ENCODE measurements at regions of chr7 and their contacts with region 1.

Region 1: DNA sequence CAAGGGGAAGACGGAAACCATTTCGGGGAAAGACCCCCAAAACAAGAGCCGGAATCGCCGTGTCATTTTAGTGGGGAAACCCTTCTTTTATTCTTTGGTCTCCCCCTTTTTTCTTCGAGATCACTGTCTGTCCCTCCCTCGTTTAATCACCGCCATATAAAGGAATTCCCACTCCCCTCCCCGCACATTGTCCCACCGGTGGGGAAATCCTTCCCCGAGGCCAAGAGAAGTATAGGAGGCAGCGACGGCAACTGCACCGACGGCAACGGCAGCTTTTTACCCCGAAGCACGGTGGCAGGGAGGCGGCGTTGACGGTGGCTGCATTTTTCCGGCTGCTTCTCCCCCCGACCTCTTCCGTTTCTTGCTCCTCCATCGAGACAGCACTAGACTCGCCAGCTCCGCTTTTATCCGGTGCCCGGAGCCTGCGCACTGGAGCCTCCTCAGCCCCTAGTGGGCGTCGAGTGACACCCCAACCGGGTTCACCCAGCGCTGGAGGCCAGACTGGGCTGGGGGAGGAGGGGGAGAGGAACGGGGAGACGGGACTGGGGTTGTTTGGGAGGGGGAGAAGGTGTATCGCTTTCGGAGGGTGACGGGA is 687 bp upstream of the KMT2E start:
- DNase-seq: peak; percentile 97
- ATAC-seq: peak; percentile 63
- H3K4me3 Mint-ChIP-seq: peak overlapping the region; percentile 96
- H3K27ac Mint-ChIP-seq: peak overlapping the region; percentile 100
- H3K4me1 Mint-ChIP-seq: peaks cover 14% of the 10 kb centered on the region
- H3K27me3 Mint-ChIP-seq: no peaks in the 10 kb centered on the region

Region 2: DNA sequence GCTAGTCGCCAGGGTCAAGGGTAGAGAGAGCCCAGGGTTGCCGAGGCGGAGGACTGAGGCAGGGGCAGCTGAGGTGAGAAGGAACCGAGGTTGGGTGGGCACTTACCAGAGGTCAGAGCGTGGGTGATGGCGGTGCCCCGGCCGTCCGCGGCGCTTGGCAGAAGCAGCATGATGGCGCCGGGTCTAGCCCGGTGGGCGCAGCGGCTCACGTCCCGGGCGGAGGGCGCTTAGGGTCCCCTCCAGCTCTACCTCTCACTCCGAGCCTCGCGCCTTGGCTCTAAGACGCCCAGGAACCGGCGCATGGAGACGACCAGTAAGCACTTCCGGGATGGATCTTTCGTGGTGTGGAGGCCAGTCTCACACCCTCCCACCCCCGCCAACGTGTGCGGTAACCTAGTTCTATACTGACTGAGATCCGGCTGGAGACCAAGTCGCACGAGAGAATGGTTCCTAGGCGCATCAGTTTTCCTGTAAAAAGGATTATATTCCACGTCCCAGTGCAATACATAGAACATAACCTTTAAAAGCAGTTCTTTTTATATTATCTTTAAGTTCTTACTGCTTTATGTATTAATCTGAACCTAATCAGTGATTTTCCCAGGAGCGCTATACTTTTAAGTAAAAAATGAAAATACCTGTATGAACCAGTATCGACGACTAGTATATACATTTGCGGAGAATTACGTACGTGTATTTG is 1668.7 kb before region 1 on chr7 and contains the start of gene DNAJC2:
- CTCF ChIA-PET with region 1: no interaction called
- POLR2A ChIA-PET with region 1: interaction called, 7 read pairs
- intact Hi-C with region 1: loop called (anchors 2 to 10 kb)
- DNase-seq: peak; percentile 91
- ATAC-seq: peak; percentile 79
- H3K4me3 Mint-ChIP-seq: peak within 1 kb of the TSS; percentile 92
- H3K27ac Mint-ChIP-seq: peak within 1 kb of the TSS; percentile 99
- H3K4me1 Mint-ChIP-seq: peaks cover 60% of the 10 kb centered on the region
- H3K27me3 Mint-ChIP-seq: no peaks in the 10 kb centered on the region
- total RNA-seq, gene DNAJC2: 50.0 to 56.2 TPM

Region 3: GRCh38 chr7:104814631-104815400 is 198.5 kb before region 1 on chr7:
- CTCF ChIA-PET with region 1: no interaction called
- POLR2A ChIA-PET with region 1: no interaction called
- intact Hi-C with region 1: no loop called
- DNase-seq: no peak
- ATAC-seq: no peak
- H3K4me3 Mint-ChIP-seq: no peak overlapping the region
- H3K27ac Mint-ChIP-seq: no peak overlapping the region
- H3K4me1 Mint-ChIP-seq: no peaks in the 10 kb centered on the region
- H3K27me3 Mint-ChIP-seq: peaks cover 10% of the 10 kb centered on the region

Region 4: GRCh38 chr7:104998040-104998752 is 15.1 kb before region 1 on chr7:
- CTCF ChIA-PET with region 1: interaction called, 14 read pairs
- POLR2A ChIA-PET with region 1: interaction called, 5 read pairs
- intact Hi-C with region 1: no loop called
- DNase-seq: no peak
- ATAC-seq: peak; percentile 53
- H3K4me3 Mint-ChIP-seq: no peak overlapping the region
- H3K27ac Mint-ChIP-seq: peak overlapping the region; percentile 78
- H3K4me1 Mint-ChIP-seq: peaks cover 91% of the 10 kb centered on the region
- H3K27me3 Mint-ChIP-seq: no peaks in the 10 kb centered on the region

Region 5: DNA sequence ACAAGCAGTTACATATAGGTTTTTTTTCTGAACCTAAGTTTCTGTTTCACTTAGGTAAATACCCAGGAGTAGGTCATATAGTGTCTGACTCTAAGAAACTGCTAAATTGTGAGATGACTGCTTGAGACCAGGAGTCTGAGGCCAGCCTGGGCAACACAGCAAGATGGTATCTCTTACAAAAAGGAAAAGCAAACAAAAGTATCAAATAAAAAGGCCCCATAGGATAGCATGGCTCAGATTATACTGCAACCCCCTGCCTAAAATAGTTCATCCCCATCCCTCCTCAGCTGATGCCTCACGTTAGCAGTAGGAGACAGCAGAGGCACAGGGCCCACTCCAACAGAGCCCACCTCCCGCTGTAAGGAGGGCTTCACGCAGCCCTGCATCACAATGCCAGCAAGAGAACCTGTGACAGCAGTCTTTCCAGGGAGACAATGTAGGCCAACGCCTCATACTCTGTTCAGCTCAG is 285.2 kb after region 1 on chr7:
- CTCF ChIA-PET with region 1: no interaction called
- POLR2A ChIA-PET with region 1: no interaction called
- intact Hi-C with region 1: loop called (anchors 5 to 10 kb)
- DNase-seq: peak; percentile 65
- ATAC-seq: peak; percentile 92
- H3K4me3 Mint-ChIP-seq: peak overlapping the region; percentile 53
- H3K27ac Mint-ChIP-seq: peak overlapping the region; percentile 90
- H3K4me1 Mint-ChIP-seq: peaks cover 58% of the 10 kb centered on the region
- H3K27me3 Mint-ChIP-seq: no peaks in the 10 kb centered on the region

Region 6: DNA sequence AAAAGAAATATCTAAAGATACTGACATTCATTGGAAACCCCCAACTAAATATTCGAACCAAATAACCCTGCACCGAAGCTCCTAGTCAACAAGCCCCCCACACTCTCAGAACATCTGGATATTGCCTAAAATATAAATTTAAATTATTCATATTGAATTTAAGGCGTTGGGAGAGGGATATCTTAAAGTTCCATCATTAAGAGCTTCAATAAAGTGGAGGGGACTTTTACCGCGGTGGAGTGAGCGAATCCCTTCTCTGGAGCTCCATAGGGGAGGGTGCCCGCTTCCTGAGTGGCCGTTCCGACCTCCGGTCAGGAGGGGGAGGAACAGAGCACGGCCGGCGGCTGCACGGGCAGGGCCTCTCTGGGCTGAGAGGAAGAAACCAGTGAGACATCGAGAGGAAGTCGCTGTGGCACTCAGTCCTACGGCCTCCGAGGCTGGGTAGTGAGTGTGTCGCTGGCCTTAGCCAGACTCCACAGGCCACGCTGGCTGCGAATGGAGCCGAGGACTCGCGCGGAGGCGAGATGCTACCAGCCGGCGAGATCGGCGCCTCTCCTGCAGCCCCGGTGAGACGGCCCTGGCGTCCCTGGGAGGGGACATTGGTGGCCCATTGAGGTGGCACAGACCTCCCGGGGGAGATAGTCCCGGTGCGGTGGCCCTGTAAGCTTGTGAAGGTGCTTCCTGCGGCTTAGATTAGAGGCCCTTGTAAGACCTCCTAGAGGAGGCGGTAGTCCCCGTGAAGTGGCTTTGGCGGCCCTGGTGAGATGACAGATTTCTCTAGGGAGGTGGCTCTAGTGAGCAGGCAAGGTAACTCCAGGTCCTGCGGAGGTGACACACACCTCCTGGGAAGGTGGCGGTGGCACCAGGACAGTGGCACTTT is 518.7 kb after region 1 on chr7 and contains the start of gene RINT1:
- CTCF ChIA-PET with region 1: interaction called, 3 read pairs
- POLR2A ChIA-PET with region 1: interaction called, 3 read pairs
- intact Hi-C with region 1: loop called in 1 of 2 experiments (anchors 2 kb)
- DNase-seq: peak; percentile 94
- ATAC-seq: peak; percentile 94
- H3K4me3 Mint-ChIP-seq: peak within 1 kb of the TSS; percentile 91
- H3K27ac Mint-ChIP-seq: peak within 1 kb of the TSS; percentile 91
- H3K4me1 Mint-ChIP-seq: peaks cover 23% of the 10 kb centered on the region
- H3K27me3 Mint-ChIP-seq: no peaks in the 10 kb centered on the region
- total RNA-seq, gene RINT1: 21.2 to 26.2 TPM

Region 7: GRCh38 chr7:106346678-106347217 is 1333.4 kb after region 1 on chr7:
- CTCF ChIA-PET with region 1: no interaction called
- POLR2A ChIA-PET with region 1: no interaction called
- intact Hi-C with region 1: loop called in 1 of 2 experiments (anchors 5 kb)
- DNase-seq: peak; percentile 65
- ATAC-seq: peak; percentile 73
- H3K4me3 Mint-ChIP-seq: peak overlapping the region; percentile 66
- H3K27ac Mint-ChIP-seq: peak overlapping the region; percentile 100
- H3K4me1 Mint-ChIP-seq: peaks cover 54% of the 10 kb centered on the region
- H3K27me3 Mint-ChIP-seq: peaks cover 12% of the 10 kb centered on the region

Measured in activated CD4-positive, alpha-beta T cell treated with anti-CD3 and anti-CD28 coated beads for 36 hours (primary cell).